ENCODE measurements at regions of chr20 and their contacts with region 1.

Region 1: GRCh38 chr20:58650776-58651558 is at the start of gene STX16:
- DNase-seq: peak; percentile 80 to 90 (median 88)
- H3K4me3 ChIP-seq: peak within 1 kb of the TSS; percentile 68 to 100 (median 91)
- H3K4me3 Mint-ChIP-seq: peak within 1 kb of the TSS; percentile 96 to 97
- H3K27ac ChIP-seq: peak within 1 kb of the TSS; percentile 95 to 98
- H3K27ac Mint-ChIP-seq: peak within 1 kb of the TSS; percentile 96 to 99 (median 98)
- H3K4me1 ChIP-seq: peaks cover 21 to 44% of the 10 kb centered on the region in 2 donors
- H3K4me1 Mint-ChIP-seq: peaks cover 20% of the 10 kb centered on the region
- H3K27me3 ChIP-seq: peaks cover 3 to 18% of the 10 kb centered on the region in 2 donors
- H3K27me3 Mint-ChIP-seq: peaks cover 12 to 15% (median 14%) of the 10 kb centered on the region in 3 donors
- CTCF ChIP-seq: peak; percentile 92
- polyA plus RNA-seq, gene STX16: 15.6 to 165 (median 27.4) TPM

Region 2: DNA sequence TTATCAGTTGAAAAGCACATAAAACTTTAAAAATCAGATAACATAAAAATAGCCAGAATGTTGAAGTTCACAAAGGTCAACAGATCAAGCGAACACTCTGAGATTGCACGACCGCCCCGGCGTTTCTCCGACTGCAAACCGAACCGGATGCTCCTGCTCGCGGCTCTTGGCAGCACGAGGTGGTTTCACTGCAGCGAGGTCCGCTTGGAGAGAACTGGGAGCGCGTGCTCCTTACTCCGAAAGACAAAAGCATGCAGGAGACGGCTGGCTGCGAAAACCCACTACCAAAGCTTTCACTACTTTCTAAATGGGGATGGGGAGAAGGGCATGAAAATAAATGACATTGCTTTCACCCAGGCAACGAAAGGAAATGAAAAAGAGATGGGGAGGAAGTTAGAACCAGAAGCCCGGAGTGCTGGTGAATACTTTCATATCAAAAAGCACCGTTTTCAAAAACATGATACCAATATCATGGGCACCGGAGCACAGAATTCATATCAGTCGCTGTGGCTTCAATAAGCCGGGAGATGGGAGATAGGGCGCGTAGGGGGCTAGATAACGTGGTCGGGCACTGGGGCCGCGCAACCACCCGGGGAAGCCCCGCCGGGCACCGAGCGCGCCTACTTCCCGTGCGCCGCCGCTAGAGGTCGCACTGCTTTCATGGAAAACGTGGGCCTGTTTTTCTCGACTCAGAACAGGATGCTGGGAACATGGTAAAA is 414.2 kb before region 1 on chr20:
- intact Hi-C with region 1: loop called in 1 of 2 experiments (anchors 10 kb)
- DNase-seq: peak; percentile 33 to 52 (median 40)
- H3K4me3 ChIP-seq: peak overlapping the region; percentile 52 to 85 (median 68)
- H3K4me3 Mint-ChIP-seq: peak overlapping the region; percentile 92 to 93
- H3K27ac ChIP-seq: peak overlapping the region in 1 of 2 donors; percentile 32
- H3K27ac Mint-ChIP-seq: peak overlapping the region in 6 of 7 donors; percentile 25 to 66 (median 48)
- H3K4me1 ChIP-seq: peaks cover 6 to 7% of the 10 kb centered on the region in 2 donors
- H3K4me1 Mint-ChIP-seq: peaks cover 7% of the 10 kb centered on the region
- H3K27me3 ChIP-seq: peaks cover 0 to 4% of the 10 kb centered on the region in 2 donors
- H3K27me3 Mint-ChIP-seq: peaks cover 3 to 10% (median 8%) of the 10 kb centered on the region in 3 donors
- CTCF ChIP-seq: peak; percentile 97

Region 3: GRCh38 chr20:58388882-58389323 is 262.1 kb before region 1 on chr20 and contains the start of gene VAPB:
- intact Hi-C with region 1: loop called (anchors 5 kb)
- DNase-seq: peak; percentile 95 to 98 (median 96)
- H3K4me3 ChIP-seq: peak within 1 kb of the TSS; percentile 75 to 89 (median 77)
- H3K4me3 Mint-ChIP-seq: peak within 1 kb of the TSS; percentile 89 to 95
- H3K27ac ChIP-seq: peak within 1 kb of the TSS; percentile 82 to 99
- H3K27ac Mint-ChIP-seq: peak within 1 kb of the TSS; percentile 94 to 98 (median 97)
- H3K4me1 ChIP-seq: peaks cover 18 to 28% of the 10 kb centered on the region in 2 donors
- H3K4me1 Mint-ChIP-seq: peaks cover 36% of the 10 kb centered on the region
- H3K27me3 ChIP-seq: peaks cover 0 to 2% of the 10 kb centered on the region in 2 donors
- H3K27me3 Mint-ChIP-seq: peaks cover 4 to 17% (median 7%) of the 10 kb centered on the region in 3 donors
- CTCF ChIP-seq: no peak
- polyA plus RNA-seq, gene VAPB: 8.5 to 14.3 (median 10.1) TPM

Region 4: GRCh38 chr20:58850693-58851174 is 199.8 kb after region 1 on chr20 and contains the start of gene GNAS-AS1:
- intact Hi-C with region 1: loop called (anchors 5 to 10 kb)
- DNase-seq: no peak
- H3K4me3 ChIP-seq: no peak within 1 kb of the TSS
- H3K4me3 Mint-ChIP-seq: peak within 1 kb of the TSS; percentile 59 to 74
- H3K27ac ChIP-seq: no peak within 1 kb of the TSS
- H3K27ac Mint-ChIP-seq: no peak within 1 kb of the TSS
- H3K4me1 ChIP-seq: peaks cover 18 to 19% of the 10 kb centered on the region in 2 donors
- H3K4me1 Mint-ChIP-seq: peaks cover 30% of the 10 kb centered on the region
- H3K27me3 ChIP-seq: peaks cover 24 to 87% of the 10 kb centered on the region in 2 donors
- H3K27me3 Mint-ChIP-seq: peaks cover 69 to 89% (median 81%) of the 10 kb centered on the region in 3 donors
- CTCF ChIP-seq: no peak
- polyA plus RNA-seq, gene GNAS-AS1: not detected

Region 5: DNA sequence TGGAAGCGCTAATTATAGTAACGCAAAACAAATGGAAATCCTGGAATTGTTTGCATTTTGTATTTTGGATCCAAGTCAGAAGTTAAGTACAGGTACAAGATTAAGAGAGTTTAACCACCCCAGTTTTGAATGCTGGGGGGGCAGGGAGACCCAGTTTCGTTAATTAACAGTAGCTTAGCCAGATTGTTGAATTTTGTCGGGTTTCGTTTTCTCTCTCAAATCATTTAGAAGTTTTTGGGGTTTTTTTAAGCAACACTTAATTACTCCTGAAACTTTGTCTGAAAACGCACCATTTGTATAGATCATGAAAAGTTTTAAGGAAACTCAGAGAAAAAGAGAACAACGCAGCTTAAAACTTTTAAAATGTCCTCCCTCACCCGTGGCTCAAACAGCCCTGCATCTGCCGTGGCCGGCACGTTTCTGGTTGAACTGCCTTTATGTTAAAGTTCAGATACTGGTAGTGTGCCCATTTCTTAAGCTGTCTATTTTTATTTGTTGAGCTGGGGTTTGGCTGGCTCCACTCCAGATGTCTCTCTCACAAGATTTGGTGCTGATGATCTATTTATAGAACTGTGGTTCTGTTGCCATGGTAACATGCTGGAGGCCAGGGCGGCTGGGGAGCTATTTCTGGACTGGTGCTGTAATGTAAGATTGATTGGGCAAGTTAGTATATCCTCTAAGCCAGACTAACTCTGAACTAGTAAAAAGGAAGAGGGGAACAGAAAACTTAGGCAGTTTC is 256.6 kb after region 1 on chr20:
- intact Hi-C with region 1: loop called in 1 of 2 experiments (anchors 10 kb)
- DNase-seq: peak; percentile 90 to 97 (median 93)
- H3K4me3 ChIP-seq: peak overlapping the region; percentile 36 to 76 (median 65)
- H3K4me3 Mint-ChIP-seq: peak overlapping the region; percentile 88 to 96
- H3K27ac ChIP-seq: peak overlapping the region; percentile 89 to 91
- H3K27ac Mint-ChIP-seq: peak overlapping the region; percentile 96 to 100 (median 99)
- H3K4me1 ChIP-seq: peaks cover 28 to 32% of the 10 kb centered on the region in 2 donors
- H3K4me1 Mint-ChIP-seq: peaks cover 40% of the 10 kb centered on the region
- H3K27me3 ChIP-seq: no peaks in the 10 kb centered on the region
- H3K27me3 Mint-ChIP-seq: peaks cover 0 to 3% (median 0%) of the 10 kb centered on the region in 3 donors
- CTCF ChIP-seq: no peak